ENCODE measurements at regions of chr20 and their contacts with region 1.

Region 1: GRCh38 chr20:56974499-56975236 is 291.8 kb downstream of the BMP7 start:
- DNase-seq: peak; percentile 92
- ATAC-seq: peak; percentile 90
- H3K4me3 ChIP-seq: peak overlapping the region; percentile 48
- H3K27ac ChIP-seq: no peak overlapping the region
- H3K4me1 ChIP-seq: peaks cover 8% of the 10 kb centered on the region; the same call in 1 of the 2 replicates
- H3K27me3 ChIP-seq: no peaks in the 10 kb centered on the region
- CTCF ChIP-seq: peak; percentile 98

Region 2: GRCh38 chr20:56483944-56484343 is 490.7 kb before region 1 on chr20:
- CTCF ChIA-PET with region 1: interaction called, 10 read pairs
- POLR2A ChIA-PET with region 1: no interaction called
- intact Hi-C with region 1: no loop called
- DNase-seq: no peak
- ATAC-seq: no peak
- H3K4me3 ChIP-seq: no peak overlapping the region
- H3K27ac ChIP-seq: no peak overlapping the region
- H3K4me1 ChIP-seq: no peaks in the 10 kb centered on the region
- H3K27me3 ChIP-seq: no peaks in the 10 kb centered on the region
- CTCF ChIP-seq: no peak

Region 3: DNA sequence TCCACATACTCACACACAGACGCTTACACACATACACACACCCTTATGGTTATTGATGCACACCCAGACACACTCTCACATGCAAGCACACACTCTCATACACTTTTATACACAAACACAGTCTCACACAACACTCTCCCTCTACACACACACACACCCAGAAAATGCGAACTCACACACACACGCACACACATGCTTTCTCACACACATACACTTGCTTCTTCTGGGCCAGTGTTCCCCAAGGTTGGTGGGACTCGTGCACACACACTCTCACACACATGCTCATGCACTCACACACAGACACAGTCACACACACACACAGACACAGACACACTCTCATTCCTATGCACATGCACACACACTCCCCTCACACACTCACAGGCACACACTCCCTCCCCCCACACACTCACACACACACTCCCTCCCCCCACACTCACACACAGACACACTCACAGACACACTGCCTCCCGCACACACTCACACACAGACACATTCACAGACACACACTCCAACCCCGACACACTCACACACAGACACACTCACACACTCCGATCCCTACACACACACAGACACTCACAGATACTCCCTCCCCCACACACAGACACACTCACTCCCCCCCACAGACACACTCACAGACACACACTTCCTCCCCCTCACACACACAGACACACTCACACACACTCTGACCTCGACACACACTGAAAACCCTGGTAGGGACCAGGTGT is 169.5 kb before region 1 on chr20:
- CTCF ChIA-PET with region 1: no interaction called
- POLR2A ChIA-PET with region 1: no interaction called
- intact Hi-C with region 1: loop called (anchors 1 kb)
- DNase-seq: no peak
- ATAC-seq: no peak
- H3K4me3 ChIP-seq: peak overlapping the region; percentile 36
- H3K27ac ChIP-seq: peak overlapping the region; percentile 93
- H3K4me1 ChIP-seq: peaks cover 36% of the 10 kb centered on the region
- H3K27me3 ChIP-seq: no peaks in the 10 kb centered on the region
- CTCF ChIP-seq: no peak

Region 4: GRCh38 chr20:56957737-56958553 is 16.7 kb before region 1 on chr20:
- CTCF ChIA-PET with region 1: no interaction called
- POLR2A ChIA-PET with region 1: no interaction called
- intact Hi-C with region 1: no loop called
- DNase-seq: no peak
- ATAC-seq: no peak
- H3K4me3 ChIP-seq: no peak overlapping the region
- H3K27ac ChIP-seq: no peak overlapping the region
- H3K4me1 ChIP-seq: no peaks in the 10 kb centered on the region
- H3K27me3 ChIP-seq: 0 out of 2 replicates have a peak, but pooled peaks cover 2% of the 10 kb centered on the region
- CTCF ChIP-seq: peak; percentile 24; the same call in 1 of the 2 replicates